ENCODE measurements at regions of chr7 and their contacts with region 1.

Region 1: DNA sequence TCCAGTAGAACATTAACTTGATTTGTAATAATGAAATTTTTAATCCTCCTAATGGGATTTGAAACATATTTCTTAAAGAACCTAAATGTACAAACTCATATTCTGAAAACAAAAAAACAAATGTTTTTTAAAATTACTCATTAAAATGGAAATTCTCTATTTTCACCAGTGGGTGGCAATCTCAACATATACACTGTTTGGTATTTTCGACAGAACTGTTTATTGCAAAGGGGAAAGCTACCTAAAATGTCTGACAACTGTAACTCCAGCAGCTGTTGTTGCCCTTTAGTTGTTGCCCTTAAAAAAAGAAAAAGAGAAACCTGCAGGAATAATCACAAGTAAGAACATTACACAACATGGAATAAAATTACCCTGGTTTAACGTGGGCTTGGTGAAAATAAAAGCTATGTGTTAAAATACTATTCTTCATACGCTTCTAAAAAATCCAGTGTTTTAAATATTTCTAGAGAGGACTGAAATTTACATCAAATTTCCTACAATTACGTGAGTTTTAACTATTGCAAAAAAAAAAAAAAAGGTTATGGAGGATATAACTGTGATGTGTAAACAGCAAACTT is 54.5 kb downstream of the COL1A2 start:
- DNase-seq: peak; percentile 45
- ATAC-seq: no peak
- H3K4me3 ChIP-seq: no peak overlapping the region
- H3K27ac ChIP-seq: no peak overlapping the region
- H3K4me1 ChIP-seq: peaks cover 57% of the 10 kb centered on the region
- H3K27me3 ChIP-seq: no peaks in the 10 kb centered on the region
- CTCF ChIP-seq: peak; percentile 63
- EP300 ChIP-seq: no peak
- POLR2A ChIP-seq: no peak
- RAD21 ChIP-seq: peak; percentile 68

Region 2: GRCh38 chr7:94313926-94314325 is 135.3 kb before region 1 on chr7:
- CTCF ChIA-PET with region 1: no interaction called
- POLR2A ChIA-PET with region 1: no interaction called
- in situ Hi-C with region 1: no loop called
- intact Hi-C with region 1: no loop called
- DNase-seq: no peak
- ATAC-seq: no peak
- H3K4me3 ChIP-seq: no peak overlapping the region
- H3K27ac ChIP-seq: no peak overlapping the region
- H3K4me1 ChIP-seq: no peaks in the 10 kb centered on the region
- H3K27me3 ChIP-seq: no peaks in the 10 kb centered on the region
- CTCF ChIP-seq: no peak
- EP300 ChIP-seq: no peak
- POLR2A ChIP-seq: no peak
- RAD21 ChIP-seq: no peak

Region 3: GRCh38 chr7:94423863-94424735 is 25.1 kb before region 1 on chr7:
- CTCF ChIA-PET with region 1: no interaction called
- POLR2A ChIA-PET with region 1: no interaction called
- in situ Hi-C with region 1: no loop called
- intact Hi-C with region 1: no loop called
- DNase-seq: no peak
- ATAC-seq: no peak
- H3K4me3 ChIP-seq: no peak overlapping the region
- H3K27ac ChIP-seq: no peak overlapping the region
- H3K4me1 ChIP-seq: no peaks in the 10 kb centered on the region
- H3K27me3 ChIP-seq: peaks cover 0 to 32% of the 10 kb centered on the region in 2 experiments; a peak in 3 of 5 replicates
- CTCF ChIP-seq: no peak
- EP300 ChIP-seq: no peak
- POLR2A ChIP-seq: no peak
- RAD21 ChIP-seq: no peak

Region 4: GRCh38 chr7:94509879-94510581 is 60.8 kb after region 1 on chr7:
- CTCF ChIA-PET with region 1: interaction called, 3 read pairs
- POLR2A ChIA-PET with region 1: no interaction called
- in situ Hi-C with region 1: no loop called
- intact Hi-C with region 1: loop called (anchors 5 kb)
- DNase-seq: peak; percentile 59
- ATAC-seq: peak; percentile 86
- H3K4me3 ChIP-seq: peak overlapping the region; percentile 66 to 83 (median 83)
- H3K27ac ChIP-seq: peak overlapping the region; percentile 96
- H3K4me1 ChIP-seq: peaks cover 73% of the 10 kb centered on the region
- H3K27me3 ChIP-seq: no peaks in the 10 kb centered on the region
- CTCF ChIP-seq: peak; percentile 45
- EP300 ChIP-seq: no peak
- POLR2A ChIP-seq: peak; percentile 77 to 80
- RAD21 ChIP-seq: peak; percentile 63

Region 5: GRCh38 chr7:94687810-94688209 is 238.6 kb after region 1 on chr7:
- CTCF ChIA-PET with region 1: no interaction called
- POLR2A ChIA-PET with region 1: no interaction called
- in situ Hi-C with region 1: no loop called
- intact Hi-C with region 1: no loop called
- DNase-seq: no peak
- ATAC-seq: no peak
- H3K4me3 ChIP-seq: no peak overlapping the region
- H3K27ac ChIP-seq: no peak overlapping the region
- H3K4me1 ChIP-seq: no peaks in the 10 kb centered on the region
- H3K27me3 ChIP-seq: no peaks in the 10 kb centered on the region
- CTCF ChIP-seq: no peak
- EP300 ChIP-seq: no peak
- POLR2A ChIP-seq: no peak
- RAD21 ChIP-seq: no peak

Region 6: DNA sequence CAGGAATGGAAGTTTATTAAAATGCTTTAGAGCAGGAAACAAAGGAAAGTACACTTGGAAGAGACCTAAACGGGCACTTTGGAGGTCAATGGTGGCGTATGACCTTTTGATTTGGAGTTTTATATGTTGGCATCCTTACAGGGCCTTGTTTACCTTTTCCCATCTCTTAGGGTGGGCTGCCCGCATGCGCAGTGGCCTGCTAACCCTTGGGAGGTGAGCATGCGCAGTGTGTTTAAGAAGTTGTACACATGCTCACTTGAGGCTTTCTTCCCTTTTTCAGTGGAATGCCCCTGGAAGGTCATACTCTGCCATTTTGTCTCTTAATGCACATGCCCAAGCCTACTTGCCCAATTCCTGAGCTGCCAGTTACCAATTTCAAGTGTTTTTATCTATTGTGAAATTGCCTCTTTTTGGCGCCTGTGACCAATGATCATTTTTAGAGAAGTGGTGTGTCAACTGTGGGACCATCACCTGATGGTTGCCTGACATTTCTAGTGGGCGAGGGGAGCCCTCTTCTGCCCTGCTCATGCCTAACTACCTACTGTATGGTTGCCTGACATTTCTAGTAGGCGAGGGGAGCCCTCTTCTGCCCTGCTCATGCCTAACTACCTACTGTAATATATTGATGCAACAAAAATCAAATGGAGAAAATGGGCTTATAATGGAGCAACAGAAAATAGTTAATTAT is 596.1 kb after region 1 on chr7:
- CTCF ChIA-PET with region 1: no interaction called
- POLR2A ChIA-PET with region 1: no interaction called
- in situ Hi-C with region 1: loop called (anchors 25 kb)
- intact Hi-C with region 1: loop called (anchors 5 kb)
- DNase-seq: peak; percentile 57
- ATAC-seq: peak; percentile 99
- H3K4me3 ChIP-seq: no peak overlapping the region
- H3K27ac ChIP-seq: no peak overlapping the region
- H3K4me1 ChIP-seq: 0 out of 2 replicates have a peak, but pooled peaks cover 11% of the 10 kb centered on the region
- H3K27me3 ChIP-seq: no peaks in the 10 kb centered on the region
- CTCF ChIP-seq: peak; percentile 84
- EP300 ChIP-seq: no peak
- POLR2A ChIP-seq: no peak
- RAD21 ChIP-seq: peak; percentile 85

Region 7: DNA sequence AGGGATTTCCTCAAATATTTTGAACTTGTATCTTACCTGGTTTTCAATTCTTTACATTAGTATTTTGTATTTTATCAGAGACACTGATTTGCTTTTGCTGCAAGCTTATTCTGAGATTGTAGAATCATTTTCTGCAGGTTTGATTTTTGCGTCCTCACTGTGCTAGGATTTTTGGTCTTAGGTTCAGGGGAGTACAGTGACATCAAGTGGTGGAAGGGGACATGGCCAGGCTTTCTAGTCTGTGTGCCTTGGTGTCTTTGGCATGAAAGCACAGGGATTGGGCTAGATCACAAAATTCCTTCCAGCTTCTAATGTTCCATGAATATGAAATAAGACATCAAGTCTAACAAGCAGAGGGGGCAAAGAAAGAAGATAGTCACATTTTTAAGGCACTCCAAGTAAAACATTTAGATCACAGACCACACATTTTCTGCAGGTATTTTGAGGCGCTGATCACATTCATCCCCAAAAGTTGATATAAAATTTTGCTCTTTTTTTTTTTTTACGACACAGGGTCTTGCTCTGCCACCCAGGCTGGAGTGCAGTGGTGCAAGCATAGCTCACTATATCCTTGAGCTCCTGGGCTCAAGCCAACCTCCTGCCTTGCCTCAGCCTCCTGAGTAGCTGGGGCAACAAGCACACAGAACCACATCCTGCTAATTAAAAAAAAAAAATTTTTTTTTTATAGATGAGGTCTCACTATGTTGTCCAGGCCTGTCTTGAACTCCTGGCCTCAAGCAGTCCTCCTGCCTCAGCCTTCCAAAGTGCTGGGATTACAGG is 750.7 kb after region 1 on chr7:
- CTCF ChIA-PET with region 1: no interaction called
- POLR2A ChIA-PET with region 1: no interaction called
- in situ Hi-C with region 1: no loop called
- intact Hi-C with region 1: loop called (anchors 10 kb)
- DNase-seq: peak; percentile 49
- ATAC-seq: peak; percentile 87
- H3K4me3 ChIP-seq: no peak overlapping the region
- H3K27ac ChIP-seq: no peak overlapping the region
- H3K4me1 ChIP-seq: no peaks in the 10 kb centered on the region
- H3K27me3 ChIP-seq: no peaks in the 10 kb centered on the region
- CTCF ChIP-seq: peak; percentile 78
- EP300 ChIP-seq: no peak
- POLR2A ChIP-seq: no peak
- RAD21 ChIP-seq: peak; percentile 49; the same call in 1 of the 2 replicates

Measured in HepG2 (cell line).